ENCODE measurements at regions of chr7 and their contacts with region 1.

Region 1: DNA sequence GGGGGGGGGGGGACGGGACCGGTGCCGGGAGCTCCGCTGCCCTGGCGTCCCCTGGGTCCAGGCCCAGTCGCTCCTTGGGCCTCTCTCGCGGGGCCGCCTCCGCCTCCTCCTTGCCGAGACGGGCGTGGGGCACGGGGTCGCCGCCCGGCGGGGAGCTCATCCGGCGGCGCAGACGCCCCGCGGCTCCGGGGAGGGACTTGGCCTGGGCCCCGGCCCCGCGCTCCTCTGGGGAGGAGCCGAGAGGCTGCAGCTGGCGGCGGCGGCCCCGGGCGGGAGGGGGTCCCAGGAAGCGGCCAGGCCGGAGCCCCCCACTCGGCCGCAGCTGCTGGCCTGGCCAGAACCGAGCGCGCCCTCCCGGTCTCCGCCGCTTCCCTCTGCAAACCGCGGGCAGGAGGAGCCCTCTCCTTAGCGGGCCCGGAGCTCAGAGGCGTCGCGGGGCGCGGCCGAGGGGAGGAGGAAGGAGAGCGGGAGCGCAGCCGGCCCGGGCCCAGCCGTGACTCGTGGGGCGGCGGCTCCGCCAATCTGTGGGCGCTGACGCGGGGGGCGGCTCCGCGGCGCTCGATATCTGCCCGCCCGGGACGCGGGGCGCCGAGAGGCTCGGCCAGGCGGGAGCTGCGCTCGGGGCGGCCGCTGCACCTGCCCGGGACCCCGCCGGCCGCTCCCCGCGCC is at the start of gene FAM20C:
- DNase-seq: peak; percentile 90
- ATAC-seq: peak; percentile 88 to 91
- total RNA-seq, gene FAM20C: 30.7 to 62.5 TPM

Region 2: GRCh38 chr7:149856-150636 is 42.1 kb before region 1 on chr7:
- intact Hi-C with region 1: loop called in 1 of 2 experiments (anchors 5 kb)
- DNase-seq: peak; percentile 49
- ATAC-seq: peak; percentile 24 to 47

Region 3: GRCh38 chr7:322111-322671 is 130.1 kb after region 1 on chr7:
- intact Hi-C with region 1: no loop called
- DNase-seq: peak; percentile 67
- ATAC-seq: peak; percentile 89 to 90

Region 4: GRCh38 chr7:391411-391951 is 199.4 kb after region 1 on chr7:
- intact Hi-C with region 1: no loop called
- DNase-seq: peak; percentile 17
- ATAC-seq: no peak

Region 5: GRCh38 chr7:604001-604883 is 412.1 kb after region 1 on chr7:
- intact Hi-C with region 1: no loop called
- DNase-seq: peak; percentile 92
- ATAC-seq: peak; percentile 89 to 91

Measured in left cardiac atrium (tissue), 4 donors.